Endothelial cell of umbilical vein (primary cell): ENCODE measurements at regions of chr2 and their contacts with region 1.

Region 1: DNA sequence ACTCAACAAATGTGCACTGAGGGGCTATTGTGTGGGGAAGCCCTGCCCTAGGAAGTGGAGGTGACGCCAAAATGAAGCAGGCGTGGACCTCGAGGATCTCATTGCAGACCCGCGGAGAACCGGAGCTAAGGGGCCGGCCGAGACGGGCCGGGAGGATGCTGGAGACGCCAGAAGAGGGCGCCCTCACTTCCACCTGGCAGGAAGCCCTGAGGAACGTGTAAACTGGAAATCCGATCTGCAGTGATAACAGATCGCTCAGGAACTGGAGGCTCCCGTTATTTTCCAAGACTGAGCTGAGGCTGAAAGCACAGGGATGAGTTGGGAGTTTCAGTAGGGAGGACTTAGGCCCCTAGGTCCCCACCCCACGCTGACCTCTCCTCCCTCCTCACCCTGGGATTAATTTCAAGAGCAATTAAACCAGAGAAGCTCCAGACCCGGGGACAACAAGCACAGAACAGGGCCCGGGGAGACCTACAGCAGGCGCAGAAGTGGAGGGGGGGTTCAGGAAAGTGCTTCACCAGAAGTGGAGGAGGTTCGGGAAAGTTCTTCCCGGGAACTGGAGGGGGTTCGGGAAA is 7.7 kb upstream of the COL6A3 start:
- DNase-seq: peak; percentile 76
- H3K4me3 ChIP-seq: no peak overlapping the region
- H3K27ac ChIP-seq: no peak overlapping the region
- H3K4me1 ChIP-seq: peaks cover 5% of the 10 kb centered on the region
- H3K27me3 ChIP-seq: peaks cover 20 to 23% of the 10 kb centered on the region in 2 experiments
- CTCF ChIP-seq: peak; percentile 84 to 85
- POLR2A ChIP-seq: no peak

Region 2: DNA sequence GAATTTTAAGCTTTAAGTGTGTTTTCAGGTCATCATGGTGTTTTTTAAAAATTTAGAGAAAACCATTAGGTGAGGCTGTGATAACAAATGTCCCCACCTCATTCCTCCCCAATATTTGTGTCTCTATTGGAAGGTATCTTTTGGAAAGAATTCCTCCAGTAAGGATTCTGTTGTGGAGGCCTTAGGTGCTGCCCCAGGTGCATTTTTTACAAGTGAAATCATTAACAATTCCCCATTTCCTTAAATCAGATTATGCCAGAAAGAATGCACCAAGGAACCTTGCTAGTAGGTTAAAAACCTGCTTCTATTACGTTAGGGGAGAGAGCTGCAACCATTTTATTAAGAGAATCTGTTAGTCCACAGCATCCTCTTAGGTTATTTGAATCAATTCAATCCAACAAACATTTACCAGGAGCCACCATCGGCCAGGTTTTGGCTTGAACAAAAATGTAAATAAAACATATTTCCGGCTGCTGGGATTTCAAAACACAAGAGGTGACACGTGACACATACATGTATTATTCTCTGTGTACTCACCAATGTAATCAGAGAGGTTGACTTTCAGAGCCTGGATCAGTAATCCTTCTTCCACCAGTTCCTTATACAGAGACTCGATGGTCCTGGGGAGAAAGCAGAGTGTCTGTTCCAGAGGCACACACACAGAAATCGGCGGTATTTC is 1044.9 kb before region 1 on chr2:
- CTCF ChIA-PET with region 1: no interaction called
- POLR2A ChIA-PET with region 1: interaction called, 10 read pairs
- dilution Hi-C with region 1: no loop called
- intact Hi-C with region 1: no loop called
- DNase-seq: no peak
- H3K4me3 ChIP-seq: no peak overlapping the region
- H3K27ac ChIP-seq: no peak overlapping the region
- H3K4me1 ChIP-seq: no peaks in the 10 kb centered on the region
- H3K27me3 ChIP-seq: no peaks in the 10 kb centered on the region
- CTCF ChIP-seq: no peak
- POLR2A ChIP-seq: no peak

Region 3: GRCh38 chr2:237122214-237122666 is 299.4 kb before region 1 on chr2:
- CTCF ChIA-PET with region 1: interaction called, 13 read pairs
- POLR2A ChIA-PET with region 1: no interaction called
- dilution Hi-C with region 1: no loop called
- intact Hi-C with region 1: loop called (anchors 1 kb)
- DNase-seq: peak; percentile 64
- H3K4me3 ChIP-seq: no peak overlapping the region
- H3K27ac ChIP-seq: no peak overlapping the region
- H3K4me1 ChIP-seq: peaks cover 3% of the 10 kb centered on the region
- H3K27me3 ChIP-seq: no peaks in the 10 kb centered on the region
- CTCF ChIP-seq: peak; percentile 64 to 73
- POLR2A ChIP-seq: no peak

Region 4: GRCh38 chr2:237154082-237154638 is 267.5 kb before region 1 on chr2:
- CTCF ChIA-PET with region 1: interaction called, 22 read pairs
- POLR2A ChIA-PET with region 1: no interaction called
- dilution Hi-C with region 1: no loop called
- intact Hi-C with region 1: loop called (anchors 1 kb)
- DNase-seq: peak; percentile 59
- H3K4me3 ChIP-seq: no peak overlapping the region
- H3K27ac ChIP-seq: no peak overlapping the region
- H3K4me1 ChIP-seq: peaks cover 8% of the 10 kb centered on the region
- H3K27me3 ChIP-seq: no peaks in the 10 kb centered on the region
- CTCF ChIP-seq: peak; percentile 73 to 75
- POLR2A ChIP-seq: no peak

Region 5: GRCh38 chr2:237223201-237223861 is 198.3 kb before region 1 on chr2:
- CTCF ChIA-PET with region 1: no interaction called
- POLR2A ChIA-PET with region 1: no interaction called
- dilution Hi-C with region 1: no loop called
- intact Hi-C with region 1: no loop called
- DNase-seq: peak; percentile 12
- H3K4me3 ChIP-seq: no peak overlapping the region
- H3K27ac ChIP-seq: no peak overlapping the region
- H3K4me1 ChIP-seq: peaks cover 9% of the 10 kb centered on the region
- H3K27me3 ChIP-seq: no peaks in the 10 kb centered on the region
- CTCF ChIP-seq: no peak
- POLR2A ChIP-seq: no peak

Region 6: GRCh38 chr2:237403024-237403882 is 18.4 kb before region 1 on chr2:
- CTCF ChIA-PET with region 1: interaction called, 60 read pairs
- POLR2A ChIA-PET with region 1: no interaction called
- dilution Hi-C with region 1: no loop called
- intact Hi-C with region 1: no loop called
- DNase-seq: no peak
- H3K4me3 ChIP-seq: no peak overlapping the region
- H3K27ac ChIP-seq: no peak overlapping the region
- H3K4me1 ChIP-seq: no peaks in the 10 kb centered on the region
- H3K27me3 ChIP-seq: peaks cover 13 to 17% of the 10 kb centered on the region in 2 experiments
- CTCF ChIP-seq: no peak
- POLR2A ChIP-seq: no peak

Region 7: DNA sequence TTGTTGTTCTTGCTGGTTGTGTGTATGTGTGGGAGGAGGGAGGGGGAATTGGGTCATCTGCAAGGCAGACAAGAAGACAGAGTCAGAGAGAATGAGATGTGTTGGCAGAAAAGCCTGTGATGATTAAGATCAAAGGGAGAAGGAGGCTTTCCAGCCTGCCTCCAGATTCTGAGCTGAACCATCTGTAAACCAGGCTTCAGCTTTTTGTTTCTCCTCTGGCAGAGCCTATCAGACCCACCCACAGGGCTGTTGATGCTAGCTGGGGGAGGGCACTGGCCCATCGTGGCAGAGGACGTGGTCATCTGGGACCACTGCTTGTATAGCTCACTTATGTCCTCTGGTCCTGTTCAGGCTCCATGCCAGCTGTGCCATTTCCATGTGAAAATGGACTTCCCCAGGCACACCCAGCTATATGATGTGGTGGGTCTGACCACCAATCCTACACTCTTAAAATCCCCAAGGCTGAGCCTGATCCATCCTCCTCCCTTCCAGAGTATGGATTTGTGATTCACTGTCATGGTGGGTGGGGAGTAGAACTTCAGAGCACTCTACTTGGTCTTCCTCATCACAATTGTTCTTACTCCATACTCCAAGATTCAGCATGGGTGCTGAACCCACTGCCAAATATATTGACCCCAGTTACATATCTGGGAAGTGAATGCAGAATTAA is 20.1 kb after region 1 on chr2:
- CTCF ChIA-PET with region 1: interaction called, 25 read pairs
- POLR2A ChIA-PET with region 1: no interaction called
- dilution Hi-C with region 1: no loop called
- intact Hi-C with region 1: no loop called
- DNase-seq: no peak
- H3K4me3 ChIP-seq: no peak overlapping the region
- H3K27ac ChIP-seq: no peak overlapping the region
- H3K4me1 ChIP-seq: no peaks in the 10 kb centered on the region
- H3K27me3 ChIP-seq: peaks cover 45 to 54% of the 10 kb centered on the region in 2 experiments
- CTCF ChIP-seq: no peak
- POLR2A ChIP-seq: no peak

Region 8: DNA sequence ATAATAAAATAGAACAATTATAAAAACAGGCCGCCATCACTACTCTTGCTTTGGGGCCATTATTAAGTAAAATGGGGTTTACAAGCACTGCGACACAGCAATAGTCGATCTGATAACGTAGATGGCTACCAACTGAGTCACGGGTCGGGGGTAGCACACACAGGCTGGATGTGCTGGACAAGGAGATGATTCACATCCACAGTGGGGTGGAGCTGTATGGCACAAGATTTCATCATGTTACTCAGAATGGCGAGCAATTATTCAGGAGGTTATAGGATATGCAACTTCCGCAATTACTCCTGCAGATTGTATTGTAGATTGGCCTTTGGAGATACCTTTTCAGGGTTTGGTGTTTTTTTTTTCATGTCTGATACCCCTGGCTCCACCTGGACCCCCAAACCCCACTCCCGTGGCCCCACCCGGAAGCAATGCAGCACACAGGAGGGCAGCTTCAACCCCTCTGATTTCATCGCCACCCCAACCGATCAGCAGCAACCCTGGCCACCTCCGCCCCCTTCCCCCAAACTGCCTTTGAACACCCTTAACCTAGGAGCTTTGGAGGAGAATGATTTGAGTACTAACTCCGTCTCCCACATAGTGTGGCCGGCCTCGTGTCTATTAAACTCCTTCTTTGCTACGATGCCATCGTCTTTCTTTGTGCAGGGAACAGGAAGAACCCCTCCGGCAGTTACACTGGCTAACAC is 44.0 kb after region 1 on chr2:
- CTCF ChIA-PET with region 1: interaction called, 50 read pairs
- POLR2A ChIA-PET with region 1: interaction called, 4 read pairs
- dilution Hi-C with region 1: no loop called
- intact Hi-C with region 1: no loop called
- DNase-seq: peak; percentile 75
- H3K4me3 ChIP-seq: no peak overlapping the region
- H3K27ac ChIP-seq: peak overlapping the region; percentile 59
- H3K4me1 ChIP-seq: peaks cover 11% of the 10 kb centered on the region
- H3K27me3 ChIP-seq: peaks cover 0 to 2% of the 10 kb centered on the region in 2 experiments
- CTCF ChIP-seq: no peak
- POLR2A ChIP-seq: peak; percentile 52